Left colon (tissue), 2 donors: ENCODE measurements at regions of chr17 and their contacts with region 1.

Region 1: DNA sequence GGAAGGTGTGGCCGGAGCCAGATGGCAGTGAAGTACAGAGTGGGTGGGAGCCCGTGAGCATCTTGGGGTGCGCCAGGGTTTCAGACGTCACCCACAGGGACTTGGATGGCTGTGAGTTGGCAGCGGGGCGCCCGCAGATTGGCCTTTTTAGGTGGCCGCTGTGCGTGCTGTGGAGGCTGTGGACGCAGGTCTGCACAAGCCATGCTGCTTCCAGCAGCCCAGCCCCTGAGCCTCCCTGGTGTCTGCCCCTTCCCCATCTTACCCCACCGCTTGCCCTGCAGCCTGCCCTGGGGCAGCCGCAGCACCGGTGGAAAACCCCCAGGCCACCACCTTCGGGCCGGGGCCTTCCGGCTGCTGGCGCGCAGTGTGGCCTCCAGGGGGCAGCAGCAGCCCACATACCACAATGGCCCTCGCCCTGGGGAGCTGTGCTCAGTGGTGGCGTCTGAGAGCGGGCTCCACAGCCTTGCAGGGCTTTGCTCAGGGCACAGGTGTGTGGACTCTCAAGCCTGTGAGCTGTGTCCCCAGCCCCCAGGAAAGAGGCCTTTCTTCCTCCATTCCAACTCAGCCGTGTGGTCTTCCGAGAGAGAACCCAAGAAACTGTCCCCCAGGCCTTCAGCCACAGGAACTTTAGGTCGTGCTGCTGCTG is 11.8 kb downstream of the ENDOV start:
- DNase-seq: peak in 1 of 2 donors; percentile 76
- ATAC-seq: peak; percentile 88

Region 2: GRCh38 chr17:80575057-80575875 is 148.5 kb after region 1 on chr17:
- intact Hi-C with region 1: loop called in 1 of 2 experiments (anchors 5 kb)
- DNase-seq: peak; percentile 80 to 97
- ATAC-seq: peak; percentile 100

Region 3: GRCh38 chr17:80970044-80970761 is 543.4 kb after region 1 on chr17:
- intact Hi-C with region 1: loop called in 1 of 2 experiments (anchors 10 kb)
- DNase-seq: peak in 1 of 2 donors; percentile 61
- ATAC-seq: peak; percentile 57

Region 4: GRCh38 chr17:80981062-80981902 is 554.5 kb after region 1 on chr17:
- intact Hi-C with region 1: loop called (anchors 5 to 10 kb)
- DNase-seq: no peak
- ATAC-seq: peak; percentile 51